Motor neuron (in vitro differentiated cells): ENCODE measurements at regions of chr3 and their contacts with region 1.

Region 1: GRCh38 chr3:159586571-159587202 is 401.9 kb upstream of the IL12A start:
- ATAC-seq: peak; percentile 47 to 97 (median 70)
- H3K4me3 ChIP-seq: no peak overlapping the region
- H3K27ac ChIP-seq: no peak overlapping the region
- H3K4me1 ChIP-seq: peaks cover 3 to 5% of the 10 kb centered on the region in 2 donors

Region 2: DNA sequence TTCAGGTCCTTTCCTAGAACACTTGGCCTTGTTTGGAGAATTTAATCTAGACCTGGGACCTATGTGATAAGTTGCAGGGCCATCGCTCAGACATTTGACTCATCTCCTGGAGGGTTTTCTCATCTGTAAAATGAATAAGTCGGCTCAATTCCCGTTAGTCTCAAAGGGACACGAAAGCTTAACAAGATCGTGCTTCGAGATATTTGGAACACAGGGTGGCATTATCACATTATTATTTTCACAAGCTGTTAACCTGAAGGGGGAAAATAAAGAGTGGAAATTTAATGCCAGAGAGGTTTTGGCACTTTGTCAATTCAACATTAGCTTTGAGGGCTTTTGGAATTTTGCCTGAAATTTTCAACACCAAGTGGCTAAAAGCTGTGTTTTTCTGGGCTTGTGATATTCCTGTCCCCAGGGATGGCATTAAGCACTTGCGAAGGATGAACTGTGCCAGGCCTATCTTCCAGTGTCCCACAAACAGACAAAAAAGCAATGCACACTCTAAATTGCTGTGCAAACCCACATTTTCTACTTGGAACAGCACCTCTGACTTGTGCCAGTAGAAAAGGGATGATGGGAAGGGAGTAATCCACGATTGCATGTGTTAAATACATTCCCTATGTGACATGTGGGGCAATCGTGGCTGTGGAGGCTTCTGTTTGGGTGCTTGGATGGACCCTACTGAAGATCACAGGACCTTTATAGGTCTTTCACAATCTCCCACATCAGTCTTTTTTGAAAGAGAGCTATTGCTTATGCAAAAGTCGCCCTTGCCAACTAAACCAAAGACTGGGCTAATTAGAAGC is 306.1 kb before region 1 on chr3:
- in situ Hi-C with region 1: loop called in 1 of 9 experiments (anchors 25 kb)
- ATAC-seq: no peak
- H3K4me3 ChIP-seq: no peak overlapping the region
- H3K27ac ChIP-seq: no peak overlapping the region
- H3K4me1 ChIP-seq: peaks cover 0 to 2% of the 10 kb centered on the region in 2 donors